WTC11 (cell line): ENCODE measurements at regions of chr6 and their contacts with region 1.

Region 1: DNA sequence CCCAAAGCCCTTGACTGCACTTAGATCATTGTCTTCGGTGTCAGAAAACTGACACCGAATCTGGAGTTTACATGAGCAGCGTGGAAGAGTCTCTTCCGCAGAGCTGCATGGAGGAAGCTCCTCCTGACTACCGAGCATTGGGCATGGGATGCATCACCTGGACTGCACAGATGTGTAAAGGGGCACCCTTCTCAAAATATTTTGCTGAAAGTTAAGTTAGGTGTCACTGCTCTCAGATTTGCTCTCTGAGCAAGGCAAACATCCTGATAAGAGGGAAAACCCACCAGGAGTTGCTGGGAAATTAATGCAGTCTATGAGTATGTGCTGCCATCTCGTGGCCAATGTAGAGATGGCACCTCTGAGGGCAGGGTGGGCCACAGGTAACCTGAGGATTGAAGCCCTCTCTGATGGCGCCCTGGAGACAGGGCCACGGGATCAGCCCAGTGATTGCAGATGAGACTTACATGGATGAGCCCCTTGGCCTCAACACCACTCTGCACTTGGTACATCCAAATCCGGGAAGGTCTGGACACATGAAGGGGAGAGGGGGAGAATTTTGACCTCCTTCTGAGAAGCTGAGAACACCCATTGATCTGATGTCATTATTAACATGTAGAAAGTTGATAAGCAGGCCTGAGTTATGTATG is 129.9 kb downstream of the LPA start:
- DNase-seq: peak; percentile 83
- ATAC-seq: peak; percentile 97
- H3K4me3 Mint-ChIP-seq: no peak overlapping the region
- H3K27ac Mint-ChIP-seq: no peak overlapping the region
- H3K4me1 Mint-ChIP-seq: no peaks in the 10 kb centered on the region
- H3K27me3 Mint-ChIP-seq: no peaks in the 10 kb centered on the region; the same call in 1 of the 2 replicates
- CTCF ChIP-seq: peak; percentile 79

Region 2: DNA sequence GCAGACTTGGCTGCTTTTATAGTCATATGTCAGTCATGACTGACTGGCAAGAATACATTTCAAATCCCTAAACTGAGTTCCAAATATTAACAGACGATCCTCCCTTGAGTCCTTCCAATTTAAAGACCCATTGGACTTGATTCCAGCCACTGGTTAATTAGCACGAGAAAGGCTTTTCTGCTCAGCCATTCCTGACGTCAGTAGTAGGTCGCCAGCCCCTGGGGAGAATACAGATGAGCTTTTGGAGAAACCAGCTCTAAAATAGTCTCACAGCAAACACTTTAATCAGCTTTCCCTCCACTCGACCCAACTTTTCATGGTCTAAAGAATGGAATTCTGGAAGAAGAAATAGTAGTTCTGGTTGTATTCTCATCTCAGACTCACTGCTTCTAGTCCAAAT is 94.4 kb before region 1 on chr6:
- CTCF ChIA-PET with region 1: no interaction called
- POLR2A ChIA-PET with region 1: no interaction called
- DNase-seq: no peak
- ATAC-seq: peak; percentile 52; the same call in 1 of the 2 replicates
- H3K4me3 Mint-ChIP-seq: no peak overlapping the region
- H3K27ac Mint-ChIP-seq: no peak overlapping the region
- H3K4me1 Mint-ChIP-seq: peaks cover 28% of the 10 kb centered on the region
- H3K27me3 Mint-ChIP-seq: peaks cover 15% of the 10 kb centered on the region
- CTCF ChIP-seq: no peak

Region 3: DNA sequence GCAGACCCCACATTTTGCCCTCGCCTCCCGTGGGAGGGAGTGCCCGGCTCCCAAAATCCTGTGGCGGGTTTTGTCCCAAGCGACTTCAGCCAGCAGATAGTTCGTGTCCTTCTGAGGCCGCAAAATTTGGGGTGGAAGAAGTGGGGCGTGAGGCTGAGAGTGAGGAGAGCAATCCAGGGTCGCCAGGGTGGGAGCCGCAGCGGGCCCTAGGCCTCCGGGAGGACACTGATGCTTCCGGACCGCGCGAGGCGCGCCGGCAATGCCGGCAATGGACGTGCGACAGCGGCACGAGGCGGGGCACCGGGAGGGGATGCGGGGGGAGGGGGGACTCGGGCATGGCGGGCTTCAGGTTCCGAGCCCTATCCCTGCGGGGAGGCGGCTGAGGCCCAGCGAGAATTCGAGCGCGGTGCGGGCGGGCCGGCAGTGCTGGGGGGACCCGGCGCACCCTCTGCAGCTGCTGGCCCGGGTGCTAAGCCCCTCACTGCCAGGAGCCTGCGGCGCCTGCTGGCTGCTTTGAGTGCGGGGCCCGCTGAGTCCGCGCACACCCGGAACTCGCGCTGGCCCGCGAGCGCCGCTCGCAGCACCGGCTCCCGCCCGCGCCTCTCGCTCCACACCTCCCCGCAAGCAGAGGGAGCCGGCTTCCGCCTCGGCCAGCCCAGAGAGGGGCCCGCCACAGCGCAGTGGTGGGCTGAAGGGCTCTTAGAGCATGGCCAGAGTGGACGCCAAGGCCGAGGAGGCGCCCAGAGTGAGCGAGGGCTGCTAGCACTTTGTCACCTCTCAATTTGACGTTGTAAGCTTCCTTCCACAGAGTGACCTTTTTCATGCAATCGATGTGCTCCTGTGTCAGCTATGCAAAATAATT is 13.9 kb before region 1 on chr6:
- CTCF ChIA-PET with region 1: interaction called, 30 read pairs
- POLR2A ChIA-PET with region 1: no interaction called
- DNase-seq: peak; percentile 82
- ATAC-seq: peak; percentile 78
- H3K4me3 Mint-ChIP-seq: peak overlapping the region; percentile 88
- H3K27ac Mint-ChIP-seq: no peak overlapping the region
- H3K4me1 Mint-ChIP-seq: peaks cover 17% of the 10 kb centered on the region
- H3K27me3 Mint-ChIP-seq: peaks cover 12% of the 10 kb centered on the region
- CTCF ChIP-seq: no peak; the same call in 1 of the 2 replicates